PC-9 (cell line): ENCODE measurements at regions of chr12 and their contacts with region 1.

Region 1: DNA sequence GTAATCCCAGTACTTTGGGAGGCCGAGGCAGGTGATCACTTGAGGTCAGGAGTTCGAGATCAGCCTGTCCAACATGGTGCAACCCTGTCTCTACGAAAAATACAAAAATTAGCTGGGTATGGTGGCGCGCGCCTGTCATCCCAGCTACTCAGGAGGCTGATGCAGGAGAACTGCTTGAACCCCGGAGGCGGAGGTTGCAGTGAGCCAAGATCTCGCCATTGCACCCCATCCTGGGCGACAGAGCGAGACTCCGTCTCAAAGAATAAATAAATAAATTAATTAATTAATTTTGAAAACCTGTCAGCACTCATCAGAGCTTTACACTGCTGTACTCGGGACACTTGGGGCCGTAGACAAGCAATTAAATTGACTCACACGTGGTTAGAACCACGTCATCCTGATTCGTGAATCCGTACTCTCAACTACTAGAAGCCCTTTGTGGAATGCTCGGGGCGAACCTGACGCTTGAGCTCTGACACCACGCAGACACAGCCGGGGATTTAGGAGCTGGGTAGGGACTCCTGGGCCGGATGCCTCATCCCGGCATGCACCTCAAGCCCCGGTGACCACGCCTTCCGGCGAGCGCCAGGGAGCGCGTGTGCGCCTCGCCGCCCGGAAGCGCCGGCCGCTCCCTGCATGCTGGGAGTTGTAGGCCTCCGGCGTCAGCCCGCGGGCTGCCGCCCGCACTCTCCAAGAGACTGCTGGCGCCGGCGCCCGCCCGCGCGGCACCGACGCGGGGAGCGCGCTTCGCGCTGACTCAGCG is at the start of gene XPOT:
- DNase-seq: peak; percentile 89 to 92
- H3K4me3 ChIP-seq: peak within 1 kb of the TSS; percentile 98
- H3K27ac ChIP-seq: peak within 1 kb of the TSS; percentile 100
- H3K4me1 ChIP-seq: peaks cover 25% of the 10 kb centered on the region
- H3K27me3 ChIP-seq: no peaks in the 10 kb centered on the region
- CTCF ChIP-seq: no peak
- total RNA-seq, gene XPOT: 95.6 and 122 TPM in 2 replicates

Region 2: GRCh38 chr12:62799126-62799736 is 1604.7 kb before region 1 on chr12:
- CTCF ChIA-PET with region 1: interaction called, 10 read pairs
- POLR2A ChIA-PET with region 1: no interaction called
- intact Hi-C with region 1: no loop called
- DNase-seq: peak; percentile 52 to 54
- H3K4me3 ChIP-seq: no peak overlapping the region
- H3K27ac ChIP-seq: no peak overlapping the region
- H3K4me1 ChIP-seq: peaks cover 13% of the 10 kb centered on the region
- H3K27me3 ChIP-seq: no peaks in the 10 kb centered on the region
- CTCF ChIP-seq: peak; percentile 97

Region 3: GRCh38 chr12:64222009-64222765 is 181.7 kb before region 1 on chr12 and contains the start of gene KICS2:
- CTCF ChIA-PET with region 1: no interaction called
- POLR2A ChIA-PET with region 1: no interaction called
- intact Hi-C with region 1: loop called (anchors 1 kb)
- DNase-seq: peak; percentile 80 to 93
- H3K4me3 ChIP-seq: peak within 1 kb of the TSS; percentile 73
- H3K27ac ChIP-seq: peak within 1 kb of the TSS; percentile 89
- H3K4me1 ChIP-seq: peaks cover 29% of the 10 kb centered on the region
- H3K27me3 ChIP-seq: no peaks in the 10 kb centered on the region
- CTCF ChIP-seq: no peak
- total RNA-seq, gene KICS2: 12.1 and 14.5 TPM in 2 replicates

Region 4: GRCh38 chr12:64256166-64256800 is 147.6 kb before region 1 on chr12:
- CTCF ChIA-PET with region 1: no interaction called
- POLR2A ChIA-PET with region 1: no interaction called
- intact Hi-C with region 1: loop called (anchors 10 kb)
- DNase-seq: no peak
- H3K4me3 ChIP-seq: no peak overlapping the region
- H3K27ac ChIP-seq: no peak overlapping the region
- H3K4me1 ChIP-seq: no peaks in the 10 kb centered on the region
- H3K27me3 ChIP-seq: no peaks in the 10 kb centered on the region
- CTCF ChIP-seq: peak; percentile 88

Region 5: DNA sequence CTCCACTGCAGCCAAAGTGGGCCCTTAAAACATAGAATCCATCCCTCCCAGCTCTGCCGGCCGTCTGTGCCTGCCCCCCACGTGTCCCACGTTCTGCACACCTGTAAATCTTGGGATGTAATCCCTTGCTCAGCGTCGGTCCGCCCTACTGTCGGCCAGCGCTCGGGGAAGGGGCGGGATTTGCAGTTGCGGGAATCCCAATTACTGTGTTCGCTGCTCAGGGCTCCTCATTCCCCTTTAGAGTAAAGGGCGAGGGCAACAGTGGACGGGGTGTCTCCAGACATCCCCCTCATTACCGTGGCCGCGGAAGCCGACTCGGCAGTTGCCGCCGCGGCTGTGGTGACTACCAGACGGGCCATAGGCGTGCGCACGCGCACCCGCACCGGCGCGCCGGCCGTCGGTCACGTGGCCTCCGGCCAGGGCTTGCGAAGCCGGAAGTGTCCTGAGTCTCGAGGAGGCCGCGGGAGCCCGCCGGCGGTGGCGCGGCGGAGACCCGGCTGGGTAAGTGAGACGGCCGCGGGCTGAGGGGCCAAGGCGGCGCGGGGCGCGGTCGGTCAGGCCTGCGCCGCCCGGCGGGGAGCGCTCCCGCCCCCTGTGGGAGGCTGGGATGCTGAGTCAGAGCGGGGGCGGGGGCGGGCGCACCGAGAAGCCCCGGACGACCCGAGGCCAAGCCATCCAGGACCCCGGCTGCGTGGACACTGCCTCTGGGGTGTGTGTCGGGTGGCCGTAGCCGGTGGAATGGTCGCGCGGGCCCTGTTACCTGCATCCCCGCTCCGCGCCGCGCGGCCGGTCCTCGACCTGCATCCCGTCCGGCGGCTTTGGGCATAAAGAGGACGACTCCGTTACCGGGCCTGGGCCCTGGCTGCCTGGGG is 48.0 kb after region 1 on chr12 and contains the start of gene TBK1:
- CTCF ChIA-PET with region 1: interaction called, 7 read pairs
- POLR2A ChIA-PET with region 1: no interaction called
- intact Hi-C with region 1: loop called (anchors 5 kb)
- DNase-seq: peak; percentile 74 to 90
- H3K4me3 ChIP-seq: peak within 1 kb of the TSS; percentile 69
- H3K27ac ChIP-seq: peak within 1 kb of the TSS; percentile 87
- H3K4me1 ChIP-seq: peaks cover 26% of the 10 kb centered on the region
- H3K27me3 ChIP-seq: no peaks in the 10 kb centered on the region
- CTCF ChIP-seq: no peak
- total RNA-seq, gene TBK1: 18.0 and 26.2 TPM in 2 replicates